HEK293 (cell line): ENCODE measurements at regions of chr19 and their contacts with region 1.

Region 1: DNA sequence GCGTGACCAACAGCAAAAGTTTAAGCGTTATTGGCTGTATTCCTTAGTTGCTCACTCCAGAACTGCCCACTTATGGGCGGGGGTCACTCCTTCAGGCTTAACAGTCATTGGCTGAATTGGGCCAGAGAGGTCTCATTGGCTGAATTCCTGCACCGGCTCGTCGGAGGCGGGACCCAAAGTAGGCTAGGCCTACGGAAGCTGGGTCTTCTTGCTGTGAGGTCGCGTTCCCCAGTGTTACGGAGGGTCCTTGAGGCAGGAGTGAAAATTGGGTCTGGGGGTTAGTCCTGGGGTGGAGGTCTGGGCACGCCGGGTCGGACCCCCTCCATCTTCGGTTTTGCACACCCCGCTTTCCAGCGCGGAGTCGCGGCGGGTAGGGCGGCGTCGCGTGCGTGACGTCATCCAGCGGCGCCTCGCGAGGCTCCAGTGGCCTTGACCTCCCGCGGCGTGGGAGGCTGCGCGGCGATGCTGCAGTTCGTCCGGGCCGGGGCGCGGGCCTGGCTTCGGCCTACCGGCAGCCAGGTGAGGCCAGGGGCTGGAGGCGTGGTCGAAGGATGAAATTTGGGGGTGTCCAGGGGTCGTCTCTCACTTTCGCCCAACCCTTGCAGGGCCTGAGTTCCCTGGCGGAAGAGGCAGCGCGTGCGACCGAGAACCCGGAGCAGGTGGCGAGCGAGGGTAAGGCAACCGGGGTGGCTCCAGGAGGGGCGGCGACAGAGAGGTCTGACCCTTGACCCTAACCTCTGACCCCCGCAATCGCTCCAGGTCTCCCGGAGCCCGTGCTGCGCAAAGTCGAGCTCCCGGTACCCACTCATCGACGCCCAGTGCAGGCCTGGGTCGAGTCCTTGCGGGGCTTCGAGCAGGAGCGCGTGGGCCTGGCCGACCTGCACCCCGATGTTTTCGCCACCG is at the start of gene MRPL4:
- H3K4me3 ChIP-seq: peak within 1 kb of the TSS; percentile 100
- H3K27ac ChIP-seq: peak within 1 kb of the TSS; percentile 26; the same call in 1 of the 2 replicates
- H3K4me1 ChIP-seq: no peaks in the 10 kb centered on the region
- CTCF ChIP-seq: peak; percentile 85

Region 2: GRCh38 chr19:10120538-10121189 is 131.4 kb before region 1 on chr19:
- CTCF ChIA-PET with region 1: interaction called, 13 read pairs
- POLR2A ChIA-PET with region 1: no interaction called
- H3K4me3 ChIP-seq: no peak overlapping the region
- H3K27ac ChIP-seq: no peak overlapping the region
- H3K4me1 ChIP-seq: no peaks in the 10 kb centered on the region
- CTCF ChIP-seq: no peak

Region 3: DNA sequence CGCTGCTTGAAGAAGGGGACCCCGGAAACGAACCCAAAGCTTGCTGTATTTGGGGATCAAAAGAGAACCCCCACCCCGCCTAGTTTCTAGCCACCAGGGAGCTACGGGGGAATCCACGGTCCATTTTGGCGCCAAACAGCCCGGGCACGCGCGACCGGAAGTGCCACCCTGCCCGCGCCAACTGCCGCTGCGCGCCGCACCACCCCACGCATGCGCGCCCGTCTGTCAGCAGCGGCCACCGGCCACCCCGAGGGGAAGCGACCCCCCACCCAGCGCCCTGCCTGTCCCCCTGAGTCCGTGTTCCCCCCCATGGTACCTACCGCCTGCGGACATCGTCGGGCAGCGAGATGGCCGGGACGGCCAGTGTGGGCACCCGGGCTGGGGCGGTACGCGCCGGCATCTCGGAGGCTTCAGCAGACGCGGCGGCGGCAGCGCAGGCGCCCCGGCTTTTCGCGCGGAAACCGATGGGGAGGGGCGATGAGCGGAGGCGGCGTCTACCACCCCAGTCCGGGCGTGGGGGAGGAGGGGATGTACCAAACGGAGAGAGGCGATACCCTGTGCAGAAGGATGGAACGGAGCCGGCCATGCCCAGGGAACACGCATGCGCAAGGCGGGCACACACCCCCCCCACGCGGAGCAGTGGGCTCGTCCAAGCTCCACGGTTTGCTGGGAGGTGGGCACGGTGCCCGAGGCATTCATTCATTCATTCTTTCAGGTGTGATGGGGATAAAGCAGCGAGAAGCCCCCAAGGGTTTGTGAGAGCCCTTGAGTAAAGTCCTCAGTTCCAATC is 57.3 kb before region 1 on chr19 and contains the start of gene DNMT1:
- CTCF ChIA-PET with region 1: interaction called, 10 read pairs
- POLR2A ChIA-PET with region 1: interaction called, 6 read pairs
- H3K4me3 ChIP-seq: peak within 1 kb of the TSS; percentile 99
- H3K27ac ChIP-seq: peak within 1 kb of the TSS; percentile 86
- H3K4me1 ChIP-seq: no peaks in the 10 kb centered on the region
- CTCF ChIP-seq: no peak; the same call in 1 of the 2 replicates

Region 4: DNA sequence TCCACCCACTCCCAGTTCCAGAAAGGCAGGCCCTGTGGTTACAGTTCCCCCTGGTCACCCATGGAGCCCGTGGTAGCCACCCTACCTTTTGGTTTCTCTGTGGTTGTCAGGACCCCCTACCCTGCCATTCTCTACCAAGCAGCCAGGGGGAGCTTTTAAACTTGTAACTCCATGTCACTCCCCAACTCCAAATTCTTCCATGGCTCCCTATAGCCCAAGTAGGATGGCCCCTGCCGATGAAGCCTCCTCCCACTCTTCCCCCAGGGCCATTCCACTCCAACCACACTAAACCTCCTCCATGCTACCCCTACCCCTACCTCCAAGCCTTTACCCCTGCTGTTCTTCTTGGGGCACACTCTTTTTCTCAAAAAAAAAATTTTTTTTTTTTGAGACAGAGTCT is 23.1 kb before region 1 on chr19:
- CTCF ChIA-PET with region 1: interaction called, 38 read pairs
- POLR2A ChIA-PET with region 1: interaction called, 4 read pairs
- H3K4me3 ChIP-seq: no peak overlapping the region
- H3K27ac ChIP-seq: no peak overlapping the region
- H3K4me1 ChIP-seq: no peaks in the 10 kb centered on the region
- CTCF ChIP-seq: 0 out of 2 replicates have a peak, but pooled peaks have one; percentile 40

Region 5: DNA sequence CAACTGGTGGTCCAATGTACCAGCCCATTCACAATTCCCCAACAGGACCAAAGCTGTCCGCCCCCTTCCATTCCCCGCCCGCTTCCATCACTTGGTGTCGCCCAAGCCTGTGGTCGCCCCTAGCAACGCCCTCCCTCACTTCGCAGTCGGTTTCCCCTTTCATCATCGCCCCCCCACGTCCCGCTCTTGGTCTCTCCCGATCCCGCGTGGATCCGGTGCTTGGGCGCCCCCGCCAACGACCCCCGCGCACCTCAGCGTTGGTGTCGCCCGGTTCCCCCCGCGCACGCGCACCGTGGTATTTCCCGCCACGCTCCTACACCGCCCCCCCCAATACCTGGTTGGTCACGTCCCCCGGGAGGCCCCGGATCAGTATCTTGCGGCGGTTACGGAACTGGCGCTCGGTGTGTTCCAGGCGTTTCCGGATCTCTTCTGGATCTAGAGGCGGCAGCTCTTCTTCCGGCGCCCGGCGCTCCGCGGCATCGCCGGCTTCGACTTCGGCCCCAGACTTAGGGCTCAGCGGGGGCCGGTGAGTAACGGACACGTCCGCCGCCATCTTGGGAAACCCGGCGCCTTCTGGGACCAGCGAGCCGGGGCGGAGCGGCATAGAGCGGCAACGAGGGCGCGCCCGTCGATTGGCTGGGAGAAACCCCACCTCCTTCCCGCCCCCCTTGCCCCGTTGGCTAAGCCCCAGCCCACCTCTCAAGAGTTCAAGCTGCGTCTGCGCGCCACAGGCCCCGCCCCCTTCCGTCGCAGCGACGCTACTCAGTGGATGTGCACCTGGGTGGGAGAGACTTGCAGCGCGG is 81.1 kb after region 1 on chr19 and contains the start of gene RAVER1:
- CTCF ChIA-PET with region 1: interaction called, 10 read pairs
- POLR2A ChIA-PET with region 1: no interaction called
- H3K4me3 ChIP-seq: peak within 1 kb of the TSS; percentile 92
- H3K27ac ChIP-seq: peak within 1 kb of the TSS; percentile 78
- H3K4me1 ChIP-seq: no peaks in the 10 kb centered on the region
- CTCF ChIP-seq: peak; percentile 92